ENCODE measurements at regions of chr7 and their contacts with region 1.

Region 1: GRCh38 chr7:101990811-101991418 is 173.5 kb downstream of the CUX1 start:
- DNase-seq: peak; percentile 78
- CTCF ChIP-seq: no peak

Region 2: DNA sequence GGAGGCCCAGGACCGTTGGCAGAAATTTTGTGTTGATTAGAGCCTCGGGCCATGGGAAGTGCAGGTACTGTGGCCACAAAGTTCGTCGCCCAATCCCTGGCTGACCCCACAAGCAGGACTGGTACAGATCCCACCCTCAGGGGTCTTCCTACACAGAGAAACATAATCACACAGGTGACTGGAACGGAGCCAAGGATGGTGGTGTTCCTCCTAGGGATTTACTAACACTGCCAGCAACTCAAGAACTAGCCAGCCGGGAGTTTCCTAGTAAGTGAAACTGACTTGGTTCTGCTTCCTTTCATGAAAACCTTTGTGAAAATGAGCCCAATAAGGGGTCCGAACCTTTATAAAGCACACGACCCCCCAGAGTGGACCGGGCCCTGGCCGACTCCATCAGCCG is 167.8 kb before region 1 on chr7:
- in situ Hi-C with region 1: no loop called
- DNase-seq: no peak
- CTCF ChIP-seq: no peak

Region 3: DNA sequence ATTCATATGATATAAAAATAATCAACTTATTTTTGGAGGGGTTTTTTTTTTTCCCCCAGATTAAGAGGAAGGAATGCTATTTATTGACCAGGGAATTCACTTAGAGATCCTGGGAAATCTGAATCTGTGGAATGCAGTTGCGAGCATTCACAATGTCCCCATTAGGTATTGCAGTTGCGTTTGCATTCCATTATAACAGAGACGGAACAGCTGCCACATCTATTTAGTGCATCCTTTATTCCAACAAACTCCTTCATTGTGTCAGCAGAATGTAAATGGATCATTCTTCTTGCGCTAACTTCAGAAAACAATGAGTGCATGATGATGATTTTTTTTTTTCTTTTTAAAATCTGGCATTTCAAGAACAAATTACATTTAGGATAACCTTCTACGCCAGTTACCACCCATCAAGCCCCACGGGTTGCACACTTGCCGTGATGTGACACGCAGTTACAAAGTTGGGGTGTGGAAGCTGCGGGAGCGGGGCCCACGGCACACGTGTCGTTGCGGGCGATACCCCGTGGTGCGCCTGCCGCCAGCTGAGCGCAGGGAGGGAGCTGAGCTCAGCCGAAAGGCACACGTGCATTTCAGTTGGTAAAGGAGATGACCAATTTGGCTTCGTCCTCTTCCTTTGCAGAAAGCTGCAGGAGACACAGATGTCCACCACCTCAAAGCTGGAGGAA is 120.3 kb after region 1 on chr7:
- in situ Hi-C with region 1: loop called (anchors 10 kb)
- DNase-seq: no peak
- CTCF ChIP-seq: no peak

Region 4: GRCh38 chr7:102272075-102272917 is 281.4 kb after region 1 on chr7:
- in situ Hi-C with region 1: no loop called
- DNase-seq: peak; percentile 90
- CTCF ChIP-seq: peak; percentile 96

Measured in GM13976 (cell line).